ENCODE measurements at regions of chr15 and their contacts with region 1.

Region 1: GRCh38 chr15:60374628-60375081 is 23.1 kb downstream of the ANXA2 start:
- DNase-seq: no peak
- ATAC-seq: no peak
- H3K4me3 ChIP-seq: no peak overlapping the region
- H3K4me3 Mint-ChIP-seq: no peak overlapping the region
- H3K27ac ChIP-seq: no peak overlapping the region
- H3K27ac Mint-ChIP-seq: no peak overlapping the region
- H3K4me1 ChIP-seq: no peaks in the 10 kb centered on the region
- H3K4me1 Mint-ChIP-seq: no peaks in the 10 kb centered on the region
- H3K27me3 ChIP-seq: no peaks in the 10 kb centered on the region
- H3K27me3 Mint-ChIP-seq: no peaks in the 10 kb centered on the region
- CTCF ChIP-seq: no peak

Region 2: DNA sequence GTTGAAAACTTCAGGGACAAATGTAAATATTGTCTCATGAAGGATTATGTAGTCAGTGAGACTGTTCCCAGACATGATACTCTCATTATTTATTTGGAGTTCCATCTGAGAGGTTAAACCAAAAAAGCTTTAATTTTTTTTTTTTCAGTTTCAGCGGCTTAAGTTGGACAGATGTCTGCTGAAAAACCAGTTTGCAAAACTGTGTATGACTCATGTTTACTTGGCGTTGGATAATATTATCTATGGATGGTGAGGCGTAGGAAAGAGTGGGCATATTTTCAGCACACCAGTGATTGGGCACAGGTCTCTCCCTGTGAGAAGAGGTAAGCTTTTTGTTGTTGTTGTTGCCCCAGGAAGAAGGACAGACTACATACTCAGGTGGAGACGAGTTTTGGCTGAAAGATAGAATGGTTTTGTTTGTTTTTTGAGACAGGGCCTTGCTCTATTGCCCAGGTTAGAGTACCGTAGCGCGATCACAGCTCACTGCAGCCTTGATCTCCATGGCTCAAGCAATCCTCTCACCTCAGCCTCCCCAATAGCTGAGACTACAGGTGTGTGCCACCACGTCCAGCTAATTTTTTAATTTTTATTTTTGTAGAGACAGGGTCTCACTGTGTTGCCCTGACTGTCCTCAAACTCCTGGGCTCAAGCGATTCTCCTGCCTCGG is 39.5 kb after region 1 on chr15:
- CTCF ChIA-PET with region 1: no interaction called
- POLR2A ChIA-PET with region 1: no interaction called
- intact Hi-C with region 1: loop called in 1 of 2 experiments (anchors 5 kb)
- DNase-seq: no peak
- ATAC-seq: no peak
- H3K4me3 ChIP-seq: no peak overlapping the region
- H3K4me3 Mint-ChIP-seq: no peak overlapping the region
- H3K27ac ChIP-seq: no peak overlapping the region
- H3K27ac Mint-ChIP-seq: no peak overlapping the region
- H3K4me1 ChIP-seq: no peaks in the 10 kb centered on the region
- H3K4me1 Mint-ChIP-seq: peaks cover under 1% of the 10 kb centered on the region
- H3K27me3 ChIP-seq: no peaks in the 10 kb centered on the region
- H3K27me3 Mint-ChIP-seq: no peaks in the 10 kb centered on the region
- CTCF ChIP-seq: no peak

Region 3: DNA sequence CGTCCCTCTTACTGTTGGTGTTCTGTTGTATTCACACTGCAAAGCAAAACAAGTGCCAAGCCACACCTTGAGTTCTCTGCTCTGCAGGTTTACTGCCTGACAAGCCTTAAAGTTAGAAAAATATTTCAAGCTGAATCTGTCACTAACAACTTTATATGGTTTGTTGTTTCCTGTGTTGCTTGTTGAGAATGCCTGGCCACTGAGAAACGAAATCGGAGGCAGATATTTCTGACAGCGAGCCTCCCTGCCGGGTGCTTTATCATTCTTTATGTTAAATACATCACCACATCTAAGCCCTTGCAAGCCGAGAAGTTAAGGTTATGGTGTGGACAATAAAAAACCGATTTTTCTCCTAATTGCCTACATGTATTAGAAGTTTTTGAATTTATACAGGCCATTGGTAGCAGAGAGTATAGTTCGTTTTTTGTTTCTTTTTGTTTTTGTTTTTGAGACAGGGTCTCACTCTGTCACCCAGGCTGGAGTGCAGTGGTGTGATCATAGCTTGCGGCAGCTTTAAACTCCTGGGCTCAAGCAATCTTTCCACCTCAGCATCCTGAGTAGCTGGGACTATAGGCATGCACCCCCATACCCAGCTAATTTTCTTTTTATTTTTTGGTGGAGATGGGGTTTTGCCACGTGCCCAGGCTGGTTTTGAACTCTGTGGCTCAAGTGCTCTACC is 292.7 kb after region 1 on chr15:
- CTCF ChIA-PET with region 1: no interaction called
- POLR2A ChIA-PET with region 1: no interaction called
- intact Hi-C with region 1: no loop called
- DNase-seq: peak in 2 of 9 experiments; percentile 11 to 34
- ATAC-seq: peak; percentile 26
- H3K4me3 ChIP-seq: no peak overlapping the region
- H3K4me3 Mint-ChIP-seq: peak overlapping the region; percentile 63
- H3K27ac ChIP-seq: peak overlapping the region in 1 of 2 experiments; percentile 55
- H3K27ac Mint-ChIP-seq: peak overlapping the region; percentile 71
- H3K4me1 ChIP-seq: no peaks in the 10 kb centered on the region
- H3K4me1 Mint-ChIP-seq: peaks cover 14% of the 10 kb centered on the region
- H3K27me3 ChIP-seq: no peaks in the 10 kb centered on the region
- H3K27me3 Mint-ChIP-seq: no peaks in the 10 kb centered on the region
- CTCF ChIP-seq: no peak